ENCODE measurements at regions of chr7 and their contacts with region 1.

Region 1: GRCh38 chr7:7977774-7978173 is 9.2 kb downstream of the GLCCI1 start:
- DNase-seq: no peak
- ATAC-seq: no peak
- H3K4me3 Mint-ChIP-seq: no peak overlapping the region
- H3K27ac Mint-ChIP-seq: no peak overlapping the region
- H3K4me1 Mint-ChIP-seq: peaks cover 63% of the 10 kb centered on the region
- H3K27me3 Mint-ChIP-seq: no peaks in the 10 kb centered on the region

Region 2: GRCh38 chr7:7989133-7989984 is 11.6 kb after region 1 on chr7:
- CTCF ChIA-PET with region 1: interaction called, 13 read pairs
- POLR2A ChIA-PET with region 1: interaction called, 5 read pairs
- intact Hi-C with region 1: loop called (anchors 1 to 2 kb)
- DNase-seq: no peak
- ATAC-seq: peak; percentile 64
- H3K4me3 Mint-ChIP-seq: peak overlapping the region; percentile 66
- H3K27ac Mint-ChIP-seq: peak overlapping the region; percentile 85
- H3K4me1 Mint-ChIP-seq: peaks cover 54% of the 10 kb centered on the region
- H3K27me3 Mint-ChIP-seq: no peaks in the 10 kb centered on the region

Region 3: GRCh38 chr7:8070451-8071180 is 92.8 kb after region 1 on chr7:
- CTCF ChIA-PET with region 1: no interaction called
- POLR2A ChIA-PET with region 1: no interaction called
- intact Hi-C with region 1: no loop called
- DNase-seq: no peak
- ATAC-seq: no peak
- H3K4me3 Mint-ChIP-seq: no peak overlapping the region
- H3K27ac Mint-ChIP-seq: no peak overlapping the region
- H3K4me1 Mint-ChIP-seq: peaks cover 40% of the 10 kb centered on the region
- H3K27me3 Mint-ChIP-seq: no peaks in the 10 kb centered on the region

Measured in activated CD4-positive, alpha-beta T cell treated with anti-CD3 and anti-CD28 coated beads for 36 hours (primary cell).